Activated CD4-positive, alpha-beta memory T cell treated with anti-CD3 and anti-CD28 coated beads, Interleukin-2, amount 10 ng/mL, durations not matched to agents 7 days and 5 days (primary cell): ENCODE measurements at regions of chr1 and their contacts with region 1.

Region 1: GRCh38 chr1:88683541-88684481 is at the start of gene PKN2:
- DNase-seq: peak; percentile 98
- H3K4me3 Mint-ChIP-seq: peak within 1 kb of the TSS; percentile 99
- H3K27ac Mint-ChIP-seq: peak within 1 kb of the TSS; percentile 93
- H3K4me1 Mint-ChIP-seq: peaks cover 23% of the 10 kb centered on the region
- H3K27me3 Mint-ChIP-seq: no peaks in the 10 kb centered on the region
- total RNA-seq, gene PKN2: 25.5 to 25.9 TPM

Region 2: DNA sequence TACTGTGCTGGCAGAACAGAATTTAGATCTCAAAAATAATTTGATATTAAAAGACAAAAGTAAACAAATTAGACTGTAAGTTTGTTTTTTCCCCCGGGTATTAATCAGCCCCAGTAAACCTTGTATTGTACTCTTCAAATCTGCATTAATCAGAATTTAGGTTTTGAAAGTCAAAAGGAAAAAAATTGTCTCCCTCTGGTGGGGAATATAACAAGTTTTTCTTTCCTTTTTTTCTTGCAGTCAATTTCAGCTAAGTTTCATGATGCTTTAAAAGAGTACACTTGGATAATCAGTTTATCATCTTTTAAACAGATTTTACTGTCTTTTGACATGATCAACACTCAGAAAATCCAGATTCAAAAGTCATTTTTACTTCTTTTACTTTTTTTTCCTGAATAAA is 134.3 kb before region 1 on chr1:
- CTCF ChIA-PET with region 1: no interaction called
- POLR2A ChIA-PET with region 1: no interaction called
- DNase-seq: no peak
- H3K4me3 Mint-ChIP-seq: no peak overlapping the region
- H3K27ac Mint-ChIP-seq: no peak overlapping the region
- H3K4me1 Mint-ChIP-seq: no peaks in the 10 kb centered on the region
- H3K27me3 Mint-ChIP-seq: peaks cover 3% of the 10 kb centered on the region

Region 3: DNA sequence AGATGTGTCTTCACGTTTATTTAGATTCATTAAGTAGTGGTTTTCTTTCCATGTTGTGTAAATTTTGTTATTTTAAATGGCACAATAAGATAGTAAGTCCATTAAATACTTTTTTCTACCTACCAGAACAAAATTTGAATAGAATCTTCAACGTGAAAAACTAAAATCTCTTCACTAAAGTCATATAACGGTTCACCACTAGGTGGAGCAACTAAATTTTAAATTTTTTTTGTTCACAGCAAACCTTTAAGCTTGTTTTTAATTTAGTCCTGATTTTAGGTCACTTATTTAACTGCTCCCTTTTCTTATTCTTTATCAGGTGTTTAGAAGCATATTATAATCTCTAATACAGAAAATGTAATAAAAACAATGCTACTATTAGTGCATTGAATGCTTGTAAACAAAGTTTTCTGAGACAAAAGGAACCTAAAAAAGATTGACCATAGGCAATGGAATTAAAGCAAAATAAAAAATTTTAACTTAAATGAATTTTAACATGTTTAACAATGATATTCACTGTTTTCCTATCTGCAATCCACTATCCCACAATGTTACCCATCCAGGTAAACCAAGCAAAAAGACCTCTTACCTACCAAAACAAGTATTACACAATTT is 28.0 kb before region 1 on chr1:
- CTCF ChIA-PET with region 1: interaction called, 30 read pairs
- POLR2A ChIA-PET with region 1: interaction called, 28 read pairs
- DNase-seq: no peak
- H3K4me3 Mint-ChIP-seq: no peak overlapping the region
- H3K27ac Mint-ChIP-seq: no peak overlapping the region
- H3K4me1 Mint-ChIP-seq: peaks cover 7% of the 10 kb centered on the region
- H3K27me3 Mint-ChIP-seq: peaks cover 2% of the 10 kb centered on the region

Region 4: GRCh38 chr1:88661951-88662699 is 21.7 kb before region 1 on chr1:
- CTCF ChIA-PET with region 1: interaction called, 12 read pairs
- POLR2A ChIA-PET with region 1: interaction called, 28 read pairs
- DNase-seq: no peak
- H3K4me3 Mint-ChIP-seq: no peak overlapping the region
- H3K27ac Mint-ChIP-seq: no peak overlapping the region
- H3K4me1 Mint-ChIP-seq: peaks cover 17% of the 10 kb centered on the region
- H3K27me3 Mint-ChIP-seq: peaks cover 3% of the 10 kb centered on the region

Region 5: DNA sequence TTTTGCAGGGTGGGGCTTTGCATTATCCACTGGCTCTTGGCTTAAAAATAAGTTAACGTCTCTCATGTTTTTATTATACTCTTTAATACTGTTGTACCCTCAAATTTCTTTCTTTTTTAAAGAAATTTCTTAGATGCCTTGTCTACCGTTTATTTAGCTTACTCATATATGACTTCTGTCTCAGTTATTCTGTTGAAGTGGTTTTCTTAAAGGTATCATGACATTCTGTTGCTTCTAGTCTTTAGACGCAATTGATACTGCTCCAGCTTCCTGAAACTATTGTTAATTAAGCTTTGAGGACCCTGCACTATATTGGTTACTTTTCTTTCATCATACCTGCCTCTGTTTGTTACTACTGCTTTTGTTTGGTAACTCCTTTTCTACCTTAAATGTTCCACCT is 12.0 kb after region 1 on chr1:
- CTCF ChIA-PET with region 1: interaction called, 3 read pairs
- POLR2A ChIA-PET with region 1: interaction called, 11 read pairs
- DNase-seq: no peak
- H3K4me3 Mint-ChIP-seq: no peak overlapping the region
- H3K27ac Mint-ChIP-seq: no peak overlapping the region
- H3K4me1 Mint-ChIP-seq: peaks cover 11% of the 10 kb centered on the region
- H3K27me3 Mint-ChIP-seq: no peaks in the 10 kb centered on the region

Region 6: DNA sequence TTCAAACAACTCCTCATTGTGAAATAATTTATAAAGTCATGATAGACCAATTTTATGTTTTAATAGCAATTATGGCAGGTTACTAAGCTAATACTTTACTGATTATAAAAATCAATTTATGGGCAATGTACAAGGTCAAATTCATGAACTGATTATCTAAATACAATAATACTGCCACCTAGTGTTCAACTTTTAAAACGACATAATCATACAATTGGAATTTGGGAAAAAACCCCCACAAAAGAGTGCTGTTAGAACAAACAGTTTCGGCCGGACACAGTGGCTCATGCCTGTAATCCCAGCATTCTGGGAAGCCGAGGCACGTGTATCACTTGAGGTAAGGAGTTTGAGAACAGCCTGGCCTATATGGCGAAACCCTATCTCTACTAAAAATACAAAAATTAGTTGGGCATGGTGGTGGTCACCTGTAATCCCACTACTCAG is 193.6 kb after region 1 on chr1:
- CTCF ChIA-PET with region 1: interaction called, 12 read pairs
- POLR2A ChIA-PET with region 1: interaction called, 3 read pairs
- DNase-seq: no peak
- H3K4me3 Mint-ChIP-seq: no peak overlapping the region
- H3K27ac Mint-ChIP-seq: no peak overlapping the region
- H3K4me1 Mint-ChIP-seq: peaks cover 21% of the 10 kb centered on the region
- H3K27me3 Mint-ChIP-seq: no peaks in the 10 kb centered on the region

Region 7: GRCh38 chr1:88891318-88891950 is 207.6 kb after region 1 on chr1 and contains the start of gene GTF2B:
- CTCF ChIA-PET with region 1: interaction called, 5 read pairs
- POLR2A ChIA-PET with region 1: interaction called, 39 read pairs
- DNase-seq: peak; percentile 96
- H3K4me3 Mint-ChIP-seq: peak within 1 kb of the TSS; percentile 92
- H3K27ac Mint-ChIP-seq: peak within 1 kb of the TSS; percentile 93
- H3K4me1 Mint-ChIP-seq: peaks cover 46% of the 10 kb centered on the region
- H3K27me3 Mint-ChIP-seq: no peaks in the 10 kb centered on the region
- total RNA-seq, gene GTF2B: 41.9 to 47.1 TPM